ENCODE measurements at regions of chr3 and their contacts with region 1.

Region 1: GRCh38 chr3:184154885-184155643 is at the start of gene DVL3:
- DNase-seq: peak; percentile 40
- H3K4me3 ChIP-seq: peak within 1 kb of the TSS; percentile 78 to 87 (median 83)
- H3K27ac ChIP-seq: peak within 1 kb of the TSS; percentile 25
- H3K4me1 ChIP-seq: peaks cover 17% of the 10 kb centered on the region
- H3K27me3 ChIP-seq: no peaks in the 10 kb centered on the region
- CTCF ChIP-seq: no peak
- POLR2A ChIP-seq: peak; percentile 61
- total RNA-seq, gene DVL3: 59.0 and 61.3 TPM in 2 replicates

Region 2: DNA sequence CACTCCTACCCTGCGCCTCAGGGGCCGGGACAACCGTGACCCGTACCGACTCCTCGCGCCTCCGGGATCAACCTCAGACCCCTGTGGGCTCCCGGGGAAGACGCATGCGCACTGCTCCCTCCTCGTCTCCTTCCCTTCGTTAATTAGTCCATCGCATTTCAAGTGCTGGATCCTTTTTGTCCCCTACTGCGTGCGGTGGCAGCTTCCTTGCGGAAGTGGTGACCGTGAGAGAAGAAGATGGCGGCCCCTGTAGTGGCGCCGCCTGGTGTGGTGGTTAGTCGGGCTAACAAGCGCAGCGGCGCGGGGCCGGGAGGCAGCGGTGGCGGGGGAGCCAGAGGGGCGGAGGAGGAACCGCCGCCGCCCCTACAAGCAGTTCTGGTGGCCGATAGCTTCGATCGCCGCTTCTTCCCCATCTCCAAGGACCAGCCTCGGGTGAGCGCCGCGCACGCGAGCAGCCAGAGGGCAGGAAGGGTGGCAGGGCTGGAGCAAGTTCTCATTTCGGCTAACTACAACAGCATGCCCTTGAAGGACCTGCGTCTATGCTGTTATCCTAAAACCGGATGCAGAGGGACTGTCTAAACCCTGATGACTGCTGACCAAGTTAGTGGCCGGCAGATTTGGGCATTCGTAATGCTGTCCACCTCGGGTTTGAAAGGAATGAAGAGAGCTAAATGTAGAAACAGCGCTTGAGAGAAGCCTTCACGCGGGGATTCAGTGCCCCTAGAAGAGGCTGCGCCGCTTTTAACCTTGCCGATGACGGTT is 19.7 kb before region 1 on chr3 and contains the start of gene EIF2B5:
- CTCF ChIA-PET with region 1: interaction called, 10 read pairs
- POLR2A ChIA-PET with region 1: no interaction called
- dilution Hi-C with region 1: no loop called
- intact Hi-C with region 1: loop called (anchors 1 kb)
- DNase-seq: peak; percentile 96
- H3K4me3 ChIP-seq: peak within 1 kb of the TSS; percentile 67 to 92 (median 90)
- H3K27ac ChIP-seq: peak within 1 kb of the TSS; percentile 56
- H3K4me1 ChIP-seq: peaks cover 27% of the 10 kb centered on the region
- H3K27me3 ChIP-seq: no peaks in the 10 kb centered on the region
- CTCF ChIP-seq: peak; percentile 26 to 41
- POLR2A ChIP-seq: peak; percentile 77
- total RNA-seq, gene EIF2B5: 38.8 and 44.7 TPM in 2 replicates

Region 3: DNA sequence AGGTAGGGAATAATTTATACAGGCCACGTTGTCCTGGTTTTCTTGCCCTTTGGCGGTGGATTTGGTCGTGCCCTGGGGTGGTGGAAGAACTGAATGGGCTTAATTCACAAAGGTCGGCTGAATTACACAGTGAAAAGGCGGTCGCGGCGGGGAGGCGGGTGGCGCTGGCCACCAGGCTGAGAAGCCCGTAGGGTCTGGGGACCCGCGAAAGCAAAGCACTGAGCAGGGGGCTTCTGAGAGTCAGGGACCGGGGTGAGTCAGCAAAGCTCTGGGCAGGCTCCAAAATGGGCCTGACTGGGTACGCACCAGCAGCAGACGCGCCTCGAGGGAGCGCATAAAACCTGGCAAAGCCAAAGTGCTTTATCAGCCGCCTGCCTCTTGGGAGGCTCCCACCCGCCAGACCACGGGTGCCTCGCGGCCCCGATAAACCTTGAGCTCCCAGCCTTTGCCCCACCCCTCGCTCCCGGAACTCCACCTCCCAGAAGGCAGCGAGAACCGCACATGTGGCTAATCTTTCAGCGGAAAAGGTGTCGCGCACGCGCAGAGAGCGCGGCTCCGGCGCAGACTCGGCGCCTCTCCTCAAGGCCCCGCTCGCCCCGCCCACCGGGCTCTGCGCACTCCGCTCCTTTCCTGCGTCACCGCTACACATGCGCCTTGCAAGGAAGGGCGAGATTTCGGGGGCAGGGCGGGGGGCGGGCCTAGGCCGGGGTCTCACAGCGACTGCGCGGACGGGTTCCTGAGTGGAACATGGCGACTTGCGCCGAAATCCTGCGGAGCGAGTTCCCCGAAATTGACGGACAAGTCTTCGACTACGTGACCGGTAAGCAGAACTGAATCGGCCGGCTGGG is 30.6 kb after region 1 on chr3 and contains the start of gene ABCF3:
- CTCF ChIA-PET with region 1: interaction called, 3 read pairs
- POLR2A ChIA-PET with region 1: no interaction called
- dilution Hi-C with region 1: no loop called
- intact Hi-C with region 1: loop called (anchors 1 kb)
- DNase-seq: peak; percentile 99
- H3K4me3 ChIP-seq: peak within 1 kb of the TSS; percentile 5 to 92 (median 54)
- H3K27ac ChIP-seq: peak within 1 kb of the TSS; percentile 64
- H3K4me1 ChIP-seq: peaks cover 14% of the 10 kb centered on the region
- H3K27me3 ChIP-seq: no peaks in the 10 kb centered on the region
- CTCF ChIP-seq: no peak
- POLR2A ChIP-seq: peak; percentile 87
- total RNA-seq, gene ABCF3: 65.6 and 68.8 TPM in 2 replicates

Region 4: DNA sequence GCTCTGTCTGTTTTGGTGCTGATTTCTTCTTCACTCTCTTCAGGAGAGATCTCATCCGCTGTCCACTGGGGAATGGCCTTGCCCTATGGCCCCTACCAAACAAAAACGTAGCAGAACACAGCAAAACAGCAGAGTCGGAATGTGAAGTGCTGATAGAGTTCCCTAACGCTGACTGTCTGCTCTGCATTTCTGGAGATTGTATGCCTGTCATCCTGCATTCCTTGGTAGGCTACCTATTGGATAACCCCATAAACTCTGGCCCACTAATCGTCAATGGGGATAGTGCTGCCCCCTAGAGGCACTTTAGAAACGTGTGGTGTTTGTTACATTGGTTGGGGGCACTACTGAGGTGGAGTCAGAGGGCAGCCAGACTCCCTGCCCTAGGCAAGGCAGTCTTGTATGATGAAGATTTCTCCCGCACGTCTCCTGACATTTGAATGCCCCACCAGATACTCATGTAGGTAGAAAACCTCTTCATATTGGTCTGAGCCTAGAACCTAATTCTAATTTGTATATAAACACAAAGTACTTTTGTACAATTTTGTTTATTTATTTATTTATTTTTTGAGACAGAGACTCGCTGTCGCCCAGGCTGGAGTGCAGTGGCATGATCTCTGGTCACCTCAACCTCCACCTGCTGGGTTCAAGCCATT is 572.4 kb after region 1 on chr3:
- CTCF ChIA-PET with region 1: no interaction called
- POLR2A ChIA-PET with region 1: no interaction called
- dilution Hi-C with region 1: no loop called
- intact Hi-C with region 1: no loop called
- DNase-seq: peak; percentile 65
- H3K4me3 ChIP-seq: no peak overlapping the region
- H3K27ac ChIP-seq: no peak overlapping the region
- H3K4me1 ChIP-seq: no peaks in the 10 kb centered on the region
- H3K27me3 ChIP-seq: peaks cover 3 to 7% of the 10 kb centered on the region in 2 experiments
- CTCF ChIP-seq: peak; percentile 73 to 74
- POLR2A ChIP-seq: no peak

Measured in endothelial cell of umbilical vein (primary cell).